A549 (cell line): ENCODE measurements at regions of chr19 and their contacts with region 1.

Region 1: DNA sequence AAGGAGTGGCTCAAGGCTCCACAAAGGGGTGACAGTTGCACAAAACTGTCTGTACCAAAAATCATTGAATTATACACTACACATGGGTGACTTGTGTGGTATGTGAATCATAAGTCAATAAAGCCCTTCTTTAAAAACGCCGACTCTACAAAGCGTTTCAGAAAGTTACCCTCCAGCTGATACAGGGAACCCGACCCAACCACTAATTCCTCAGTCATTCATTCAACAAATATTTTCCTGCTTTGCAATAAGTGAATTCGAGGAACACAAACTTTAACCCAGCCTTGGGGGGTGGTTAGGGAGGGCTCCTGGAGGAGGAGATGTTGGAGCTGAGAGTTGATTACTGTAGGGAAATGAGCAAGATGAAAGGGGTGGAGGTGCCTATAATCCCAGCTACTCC is 32.0 kb downstream of the LTBP4 start:
- DNase-seq: no peak
- ATAC-seq: 0 out of 6 replicates have a peak, but pooled peaks of 1 of the 2 experiments have one; percentile 21
- H3K4me3 ChIP-seq: no peak overlapping the region
- H3K27ac ChIP-seq: no peak overlapping the region
- H3K4me1 ChIP-seq: peaks cover 7% of the 10 kb centered on the region
- CTCF ChIP-seq: no peak
- EP300 ChIP-seq: no peak
- POLR2A ChIP-seq: no peak
- RAD21 ChIP-seq: no peak

Region 2: DNA sequence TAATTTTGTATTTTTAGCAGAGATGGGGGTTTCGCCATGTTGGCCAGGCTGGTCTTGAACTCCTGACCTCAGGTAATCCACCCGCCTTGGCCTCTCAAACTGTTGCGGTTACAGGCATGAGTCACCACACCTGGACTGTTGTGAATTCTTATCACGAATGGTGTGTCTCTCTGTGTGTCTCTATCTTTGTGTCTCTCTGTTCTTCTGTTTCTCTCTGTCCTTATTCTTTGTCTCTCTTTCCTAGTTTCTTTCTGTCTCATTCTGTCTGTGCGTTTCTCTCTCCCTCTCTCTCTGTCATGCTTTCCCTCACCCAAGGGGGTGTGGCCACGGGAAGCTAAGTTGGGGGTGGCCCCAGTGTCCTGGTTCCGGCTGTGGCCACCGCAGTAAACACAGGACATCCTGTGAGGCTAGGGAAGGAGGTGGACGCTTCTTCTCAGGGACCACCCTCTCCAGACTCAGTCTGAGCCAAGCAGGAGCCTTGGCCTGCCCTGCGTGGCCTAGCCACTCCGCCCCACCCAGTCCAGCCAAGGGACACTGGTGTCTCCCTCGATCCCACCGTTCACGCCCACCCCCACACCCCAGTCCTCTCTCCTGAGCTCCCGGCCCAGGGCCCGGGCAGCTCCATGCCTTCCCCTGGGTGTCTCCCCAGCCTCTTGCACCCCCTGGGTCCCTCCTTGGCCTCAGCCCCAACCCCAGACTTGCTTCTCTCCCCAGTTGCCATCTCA is 216.1 kb before region 1 on chr19:
- CTCF ChIA-PET with region 1: interaction called, 11 read pairs
- POLR2A ChIA-PET with region 1: no interaction called
- DNase-seq: peak in 1 of 2 experiments; percentile 71
- ATAC-seq: peak in 1 of 2 experiments; percentile 0; a peak in 1 of 6 replicates
- H3K4me3 ChIP-seq: no peak overlapping the region
- H3K27ac ChIP-seq: peak overlapping the region; percentile 37 to 75
- H3K4me1 ChIP-seq: peaks cover 17% of the 10 kb centered on the region
- CTCF ChIP-seq: no peak
- EP300 ChIP-seq: no peak
- POLR2A ChIP-seq: no peak
- RAD21 ChIP-seq: no peak

Region 3: GRCh38 chr19:40512473-40513344 is 120.5 kb before region 1 on chr19:
- CTCF ChIA-PET with region 1: interaction called, 35 read pairs
- POLR2A ChIA-PET with region 1: no interaction called
- DNase-seq: peak in 1 of 2 experiments; percentile 65
- ATAC-seq: peak; percentile 73 to 76
- H3K4me3 ChIP-seq: peak overlapping the region; percentile 37
- H3K27ac ChIP-seq: 0 out of 6 replicates have a peak overlapping the region, but pooled peaks of 1 of the 2 experiments have one; percentile 0
- H3K4me1 ChIP-seq: peaks cover 5% of the 10 kb centered on the region; the same call in 1 of the 3 replicates
- CTCF ChIP-seq: no peak; the same call in 2 of the 3 replicates
- EP300 ChIP-seq: no peak
- POLR2A ChIP-seq: no peak
- RAD21 ChIP-seq: no peak

Region 4: DNA sequence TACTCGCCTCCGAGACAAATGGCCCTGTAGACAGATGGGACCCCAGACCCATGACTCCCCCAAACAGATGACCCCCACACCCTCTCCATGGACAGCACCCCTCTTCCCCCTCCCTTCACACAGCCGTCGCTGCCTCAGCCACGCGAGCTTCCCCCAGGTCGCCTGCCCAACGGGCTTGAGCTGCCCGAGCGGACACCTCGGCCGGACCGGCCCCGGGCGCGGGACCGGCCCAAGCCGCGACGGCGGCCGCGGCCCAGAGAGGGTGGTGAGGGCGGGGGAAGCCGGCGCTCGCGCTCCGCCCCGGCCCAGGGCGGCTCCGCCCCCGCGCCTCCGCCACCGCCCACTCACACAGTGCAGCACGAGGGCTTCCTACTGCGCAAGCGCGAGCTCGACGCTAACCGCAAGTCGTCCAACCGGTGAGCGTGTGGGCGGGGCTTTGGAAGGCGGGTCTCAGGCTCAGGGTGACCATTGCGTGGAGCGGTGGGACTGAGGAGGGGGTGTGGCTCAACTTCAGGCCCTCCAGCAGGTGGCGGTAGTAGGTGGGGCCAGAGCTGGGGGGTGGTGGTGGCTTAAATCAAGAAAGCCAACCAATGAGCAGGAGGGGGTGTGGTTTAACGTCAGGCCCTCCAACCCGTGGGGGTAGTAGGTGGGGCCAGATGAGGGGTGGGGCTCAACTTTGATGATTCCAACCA is 62.7 kb before region 1 on chr19:
- CTCF ChIA-PET with region 1: interaction called, 53 read pairs
- POLR2A ChIA-PET with region 1: interaction called, 3 read pairs
- DNase-seq: peak; percentile 100
- ATAC-seq: peak; percentile 80 to 91
- H3K4me3 ChIP-seq: peak overlapping the region; percentile 56
- H3K27ac ChIP-seq: peak overlapping the region; percentile 84 to 89
- H3K4me1 ChIP-seq: peaks cover 17% of the 10 kb centered on the region
- CTCF ChIP-seq: peak; percentile 59
- EP300 ChIP-seq: no peak
- POLR2A ChIP-seq: peak; percentile 78
- RAD21 ChIP-seq: peak; percentile 55 to 59

Region 5: DNA sequence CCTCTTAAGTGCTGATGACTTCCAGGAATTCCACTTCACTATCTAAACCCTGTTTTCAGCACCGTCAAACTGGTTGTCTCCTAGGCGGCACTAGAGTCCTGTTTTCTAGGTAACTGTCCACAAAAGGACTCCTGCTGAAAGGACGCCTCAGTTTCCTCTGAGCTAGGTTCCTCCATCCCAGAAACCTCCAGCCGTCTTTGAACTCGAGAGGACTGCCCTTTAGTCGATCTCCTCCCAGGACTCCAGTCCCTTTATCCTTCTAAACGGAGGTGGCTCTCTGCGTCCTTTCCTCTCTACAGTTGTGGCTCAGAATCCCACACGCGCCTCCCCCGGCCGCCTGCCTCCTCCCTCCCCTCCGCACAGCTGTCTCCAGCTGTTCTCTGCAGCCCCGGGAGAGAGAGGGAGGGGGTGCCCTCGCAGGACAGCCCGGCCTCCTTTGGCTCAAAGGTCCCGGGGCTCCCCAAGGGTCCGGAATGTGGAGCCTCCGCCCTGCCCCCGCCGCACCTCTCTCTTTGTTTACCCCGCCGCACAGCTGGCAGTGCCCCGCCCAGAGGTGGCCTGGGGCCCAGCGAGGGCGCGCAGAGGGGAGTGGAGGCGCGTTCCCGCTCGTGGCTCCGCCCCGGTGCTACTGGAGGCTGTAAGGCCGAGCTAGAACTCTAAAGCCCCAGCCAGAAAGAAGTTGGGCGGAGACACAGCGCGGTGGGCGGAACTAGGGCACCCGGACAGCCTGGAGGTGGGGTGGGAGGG is 29.6 kb before region 1 on chr19:
- CTCF ChIA-PET with region 1: interaction called, 409 read pairs
- POLR2A ChIA-PET with region 1: interaction called, 15 read pairs
- DNase-seq: peak; percentile 99 to 100
- ATAC-seq: peak; percentile 41 to 80
- H3K4me3 ChIP-seq: peak overlapping the region; percentile 36
- H3K27ac ChIP-seq: peak overlapping the region; percentile 55 to 85
- H3K4me1 ChIP-seq: peaks cover 58% of the 10 kb centered on the region
- CTCF ChIP-seq: peak; percentile 20; the same call in 1 of the 3 replicates
- EP300 ChIP-seq: no peak
- POLR2A ChIP-seq: peak; percentile 20; the same call in 1 of the 2 replicates
- RAD21 ChIP-seq: no peak; a peak in 1 of 5 replicates

Region 6: DNA sequence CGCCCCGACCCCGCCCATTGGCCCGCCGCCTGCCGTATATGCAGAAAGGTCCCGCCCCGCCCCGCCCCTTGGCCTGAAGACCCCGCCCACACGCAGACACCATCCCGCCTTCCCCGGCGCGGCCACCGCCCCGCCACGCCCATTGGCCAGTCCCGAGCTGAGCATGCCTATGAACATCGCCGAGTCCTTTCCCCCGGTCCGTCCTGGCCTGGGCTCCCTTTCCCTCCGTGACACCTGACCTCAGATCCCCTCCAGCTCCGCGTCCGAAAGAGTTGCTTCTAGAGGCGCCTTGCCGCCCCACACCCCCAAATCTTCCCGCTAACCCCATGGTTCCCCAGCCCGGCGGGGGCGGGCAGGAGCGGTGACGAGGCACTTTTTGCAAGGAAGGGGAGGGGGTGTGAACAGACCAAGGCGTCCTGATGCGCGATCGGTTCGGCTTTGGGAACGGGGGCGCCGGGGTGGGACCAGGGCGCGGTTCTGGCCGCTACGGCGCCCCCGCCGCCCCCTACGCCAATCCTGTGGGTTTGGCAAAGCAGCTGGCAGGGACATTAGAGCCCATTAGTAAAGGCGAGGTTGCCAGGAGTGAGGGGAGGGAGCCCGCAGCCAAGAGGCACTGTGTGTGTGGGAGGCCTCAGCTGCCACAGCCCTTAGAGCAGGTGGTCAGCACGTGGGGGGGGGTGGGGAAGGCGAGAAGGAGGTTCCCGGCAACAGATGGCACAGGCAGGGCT is 57.6 kb after region 1 on chr19:
- CTCF ChIA-PET with region 1: interaction called, 10 read pairs
- POLR2A ChIA-PET with region 1: no interaction called
- DNase-seq: peak; percentile 98 to 100
- ATAC-seq: peak; percentile 60 to 89
- H3K4me3 ChIP-seq: peak overlapping the region; percentile 73
- H3K27ac ChIP-seq: peak overlapping the region; percentile 93 to 99
- H3K4me1 ChIP-seq: peaks cover 42% of the 10 kb centered on the region
- CTCF ChIP-seq: no peak
- EP300 ChIP-seq: peak in 1 of 2 experiments; percentile 20; a peak in 1 of 5 replicates
- POLR2A ChIP-seq: peak; percentile 79
- RAD21 ChIP-seq: no peak; a peak in 1 of 5 replicates